IMR-90 (cell line): ENCODE measurements at regions of chr14 and their contacts with region 1.

Region 1: DNA sequence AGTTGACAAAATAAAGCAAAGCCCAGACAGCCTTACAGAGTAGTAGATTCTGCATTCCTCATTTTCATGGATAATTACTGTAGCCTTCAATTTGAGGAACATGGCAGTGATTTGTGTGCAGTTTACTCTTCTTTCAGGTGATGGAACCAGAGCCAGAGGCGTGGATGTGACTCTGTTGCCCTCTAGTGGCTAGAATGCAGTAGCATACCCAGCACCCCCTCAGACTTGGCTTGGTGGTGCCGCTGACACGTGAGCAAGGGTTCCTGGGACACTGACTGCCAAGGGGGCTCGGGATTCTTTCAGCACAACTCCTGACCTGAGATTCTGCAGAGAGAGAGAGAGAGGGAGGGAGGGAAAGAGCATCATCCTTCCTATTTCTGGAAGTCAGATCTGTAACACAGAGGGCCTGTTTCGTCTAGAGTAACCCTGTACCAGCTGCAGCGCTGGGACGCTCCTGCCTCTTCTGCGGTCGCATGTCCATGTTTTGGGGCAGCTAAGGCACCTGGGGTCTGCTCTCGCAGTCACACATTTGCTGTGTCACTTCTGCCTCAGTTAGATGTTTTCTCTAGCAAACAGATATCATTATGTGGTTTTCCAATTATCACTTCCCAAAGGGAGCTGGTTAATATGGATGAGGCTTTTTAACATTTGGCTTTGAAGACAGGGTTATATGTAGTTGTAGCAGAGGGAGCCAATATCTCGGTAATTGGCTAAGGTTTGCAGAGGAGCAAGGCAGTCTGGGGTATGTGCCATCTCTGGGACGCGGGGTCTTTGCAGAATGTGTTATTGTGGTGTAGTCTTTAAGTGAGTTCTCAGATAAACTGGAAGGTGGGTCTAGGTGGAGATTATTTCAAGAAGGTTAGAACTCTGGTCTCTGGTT is 428.1 kb downstream of the NRXN3 start:
- DNase-seq: peak; percentile 26
- ATAC-seq: peak; percentile 94
- H3K4me3 ChIP-seq: no peak overlapping the region
- H3K27ac ChIP-seq: no peak overlapping the region
- H3K4me1 ChIP-seq: no peaks in the 10 kb centered on the region
- H3K27me3 ChIP-seq: no peaks in the 10 kb centered on the region
- CTCF ChIP-seq: peak; percentile 87
- POLR2A ChIP-seq: no peak
- RAD21 ChIP-seq: peak; percentile 73

Region 2: DNA sequence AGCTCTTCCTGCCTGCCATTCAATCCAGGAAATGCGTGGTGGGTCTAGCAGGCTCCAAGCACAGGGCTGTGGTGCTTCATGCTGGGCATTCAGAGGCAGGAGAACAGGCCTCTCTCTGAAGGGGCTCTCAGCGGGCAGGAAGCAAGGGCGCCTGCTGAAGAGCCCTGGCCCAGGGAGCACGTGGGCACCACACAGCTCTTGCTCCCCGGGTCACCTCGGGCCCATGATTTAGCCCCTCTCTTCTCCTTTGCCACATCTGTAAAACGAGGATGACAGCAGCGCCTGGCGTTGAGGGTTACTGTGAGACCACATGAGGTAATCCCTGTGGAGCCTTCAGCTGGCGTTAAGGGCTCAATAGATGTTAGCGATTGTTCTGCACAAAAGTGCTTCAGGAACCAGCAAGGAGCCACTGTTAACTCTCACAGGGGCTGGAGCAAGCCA is 944.3 kb before region 1 on chr14:
- CTCF ChIA-PET with region 1: no interaction called
- POLR2A ChIA-PET with region 1: no interaction called
- dilution Hi-C with region 1: no loop called
- in situ Hi-C with region 1: no loop called
- intact Hi-C with region 1: loop called (anchors 10 kb)
- DNase-seq: no peak
- ATAC-seq: no peak
- H3K4me3 ChIP-seq: no peak overlapping the region
- H3K27ac ChIP-seq: no peak overlapping the region
- H3K4me1 ChIP-seq: no peaks in the 10 kb centered on the region
- H3K27me3 ChIP-seq: no peaks in the 10 kb centered on the region
- CTCF ChIP-seq: no peak
- POLR2A ChIP-seq: no peak
- RAD21 ChIP-seq: no peak